HEK293 (cell line): ENCODE measurements at regions of chr15 and their contacts with region 1.

Region 1: DNA sequence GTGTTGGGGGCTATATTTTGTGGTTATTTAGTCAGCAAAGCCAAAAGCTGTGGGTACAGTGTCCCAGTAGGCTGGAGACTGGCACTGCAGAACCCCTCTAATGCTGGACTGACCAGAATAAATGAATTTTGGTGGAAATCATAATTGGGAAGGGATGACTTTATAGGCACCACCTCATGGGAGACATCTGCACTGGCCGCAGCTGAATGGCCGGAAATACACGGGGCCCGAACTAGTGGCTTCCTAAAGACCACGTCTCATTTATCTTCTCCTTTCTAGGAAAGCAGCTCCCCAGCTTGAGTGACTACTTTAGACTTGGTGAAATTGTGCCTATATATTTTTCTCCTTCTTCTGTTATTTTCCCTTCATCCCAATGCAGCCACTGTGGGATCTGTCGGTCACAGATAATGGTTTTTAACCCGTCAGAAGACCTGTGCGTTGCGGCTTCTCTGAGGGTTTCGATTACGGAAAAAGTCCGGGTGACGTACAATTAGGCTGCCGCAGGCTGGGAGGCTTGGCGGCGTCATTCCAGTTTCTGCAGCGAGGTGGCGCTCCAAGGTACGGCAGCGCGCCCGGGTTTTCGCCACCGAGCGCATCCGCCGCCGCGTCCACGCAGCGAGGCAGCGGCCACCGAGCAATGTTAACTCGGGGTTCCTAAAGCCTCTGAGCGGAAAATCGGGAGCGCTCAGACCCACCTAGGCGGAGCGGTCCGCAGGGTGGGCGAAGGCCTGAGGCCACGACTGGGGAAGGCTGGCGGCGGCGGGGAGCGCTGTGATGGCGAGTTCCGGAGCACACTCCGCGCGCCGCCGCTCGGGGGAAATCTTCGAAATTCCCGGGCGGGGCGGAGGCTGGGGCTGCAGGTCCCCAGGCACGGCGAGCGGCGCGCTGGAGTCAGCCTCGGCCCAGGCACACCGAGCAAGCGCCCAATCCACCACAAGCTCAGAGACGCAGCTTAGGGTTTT is 26.3 kb downstream of the NR2F2 start:
- H3K4me3 ChIP-seq: peak overlapping the region; percentile 63
- H3K27ac ChIP-seq: peak overlapping the region; percentile 65; the same call in 1 of the 2 replicates
- H3K4me1 ChIP-seq: peaks cover 18% of the 10 kb centered on the region
- CTCF ChIP-seq: peak; percentile 99

Region 2: DNA sequence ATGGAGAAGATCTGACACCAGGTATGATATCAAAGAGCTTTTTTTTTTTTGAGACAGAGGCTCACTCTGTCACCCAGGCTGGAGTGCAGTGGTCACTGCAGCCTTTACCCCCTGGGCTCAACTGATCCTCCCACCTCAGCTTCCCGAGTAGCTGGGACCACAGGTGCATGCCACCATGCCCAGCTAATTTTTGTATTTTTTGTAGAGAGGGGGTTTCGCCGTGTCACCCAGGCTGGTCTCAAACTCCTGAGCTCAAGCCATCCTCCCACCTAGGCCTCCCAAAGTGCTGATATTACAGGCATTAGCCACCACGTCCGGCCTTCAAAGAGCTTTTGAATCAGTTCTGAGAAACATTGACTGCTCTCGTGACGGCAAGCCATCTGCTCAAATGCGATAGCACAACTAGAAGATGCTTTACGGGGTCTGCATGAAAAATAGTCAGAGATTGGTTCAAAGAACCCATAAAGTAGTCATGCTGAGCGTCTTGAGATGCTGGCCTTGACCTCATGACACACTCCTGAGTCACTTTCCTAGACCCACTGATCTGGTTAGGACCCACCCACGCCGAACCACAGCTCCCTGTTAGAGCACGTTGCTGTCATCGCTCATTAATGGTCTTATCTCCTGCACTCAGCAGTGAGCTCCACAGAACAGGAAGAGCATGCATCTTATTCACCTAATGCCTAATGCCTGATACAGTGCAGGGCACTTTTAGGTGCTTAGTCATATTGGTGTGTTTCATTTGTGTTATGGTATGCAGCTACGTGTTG is 83.3 kb before region 1 on chr15:
- CTCF ChIA-PET with region 1: no interaction called
- POLR2A ChIA-PET with region 1: no interaction called
- H3K4me3 ChIP-seq: no peak overlapping the region
- H3K27ac ChIP-seq: no peak overlapping the region
- H3K4me1 ChIP-seq: peaks cover 8% of the 10 kb centered on the region
- CTCF ChIP-seq: no peak

Region 3: GRCh38 chr15:96340598-96341512 is 15.9 kb before region 1 on chr15:
- CTCF ChIA-PET with region 1: interaction called, 23 read pairs
- POLR2A ChIA-PET with region 1: interaction called, 21 read pairs
- H3K4me3 ChIP-seq: peak overlapping the region; percentile 66
- H3K27ac ChIP-seq: peak overlapping the region; percentile 96
- H3K4me1 ChIP-seq: peaks cover 30% of the 10 kb centered on the region
- CTCF ChIP-seq: peak; percentile 58

Region 4: DNA sequence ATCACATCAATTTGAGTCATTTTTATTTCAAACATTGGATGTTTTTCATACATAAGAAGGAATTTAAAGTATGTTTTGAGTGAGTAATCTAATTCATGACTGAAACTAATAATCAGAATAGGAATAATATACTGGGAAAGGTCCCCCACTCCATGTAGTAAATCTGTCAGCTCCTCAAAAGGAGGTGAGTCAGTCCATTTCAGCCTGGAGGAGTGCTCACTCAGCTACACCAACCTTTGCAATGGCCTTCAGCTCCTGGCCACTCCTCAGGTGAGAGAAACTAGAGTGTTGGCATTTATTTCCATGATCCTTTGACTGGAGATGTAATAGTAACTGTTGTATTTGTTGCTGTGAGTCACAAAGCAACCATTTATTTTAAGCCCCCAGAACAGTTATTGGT is 858.9 kb after region 1 on chr15:
- CTCF ChIA-PET with region 1: interaction called, 10 read pairs
- POLR2A ChIA-PET with region 1: no interaction called
- H3K4me3 ChIP-seq: no peak overlapping the region
- H3K27ac ChIP-seq: no peak overlapping the region
- H3K4me1 ChIP-seq: no peaks in the 10 kb centered on the region
- CTCF ChIP-seq: no peak